ENCODE measurements at regions of chr15 and their contacts with region 1.

Region 1: DNA sequence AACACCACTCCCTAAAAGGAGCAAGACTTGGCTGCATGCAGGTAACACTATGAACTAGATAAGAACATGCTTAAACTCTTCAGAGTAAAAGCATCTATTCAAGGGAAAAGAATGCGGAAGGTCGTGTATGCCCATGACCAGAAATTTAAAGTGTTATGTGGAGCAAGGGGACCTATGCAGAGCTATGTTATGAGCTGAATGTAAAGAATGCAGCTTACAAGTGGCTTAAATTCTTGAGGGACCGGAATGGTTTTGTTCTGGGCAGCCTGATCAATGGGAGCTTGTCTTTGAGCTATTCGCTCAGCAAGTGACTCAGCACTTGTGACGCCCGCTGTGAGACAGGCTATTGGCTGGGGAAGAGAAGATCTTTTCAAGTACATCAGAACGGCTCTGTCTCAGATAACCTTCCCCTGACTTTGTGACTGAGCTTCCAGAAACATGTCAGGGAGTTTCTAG is 367.5 kb upstream of the THBS1 start:
- DNase-seq: peak; percentile 71
- H3K4me3 Mint-ChIP-seq: peak overlapping the region; percentile 39
- H3K27ac Mint-ChIP-seq: peak overlapping the region; percentile 93
- H3K4me1 Mint-ChIP-seq: peaks cover 26% of the 10 kb centered on the region
- H3K27me3 Mint-ChIP-seq: no peaks in the 10 kb centered on the region
- CTCF ChIP-seq: no peak

Region 2: GRCh38 chr15:39202641-39203040 is 10.8 kb before region 1 on chr15:
- CTCF ChIA-PET with region 1: no interaction called
- intact Hi-C with region 1: no loop called
- DNase-seq: no peak
- H3K4me3 Mint-ChIP-seq: no peak overlapping the region
- H3K27ac Mint-ChIP-seq: peak overlapping the region; percentile 67
- H3K4me1 Mint-ChIP-seq: peaks cover 9% of the 10 kb centered on the region
- H3K27me3 Mint-ChIP-seq: no peaks in the 10 kb centered on the region
- CTCF ChIP-seq: no peak

Region 3: GRCh38 chr15:39273717-39274411 is 60.5 kb after region 1 on chr15:
- CTCF ChIA-PET with region 1: no interaction called
- intact Hi-C with region 1: loop called (anchors 10 kb)
- DNase-seq: peak; percentile 51
- H3K4me3 Mint-ChIP-seq: no peak overlapping the region
- H3K27ac Mint-ChIP-seq: peak overlapping the region; percentile 24
- H3K4me1 Mint-ChIP-seq: peaks cover 15% of the 10 kb centered on the region
- H3K27me3 Mint-ChIP-seq: no peaks in the 10 kb centered on the region
- CTCF ChIP-seq: no peak

Region 4: GRCh38 chr15:39573844-39574243 is 360.4 kb after region 1 on chr15:
- CTCF ChIA-PET with region 1: no interaction called
- intact Hi-C with region 1: no loop called
- DNase-seq: no peak
- H3K4me3 Mint-ChIP-seq: no peak overlapping the region
- H3K27ac Mint-ChIP-seq: no peak overlapping the region
- H3K4me1 Mint-ChIP-seq: no peaks in the 10 kb centered on the region
- H3K27me3 Mint-ChIP-seq: no peaks in the 10 kb centered on the region
- CTCF ChIP-seq: no peak

Measured in Calu3 (cell line).